AG04450 (cell line): ENCODE measurements at regions of chr2 and their contacts with region 1.

Region 1: DNA sequence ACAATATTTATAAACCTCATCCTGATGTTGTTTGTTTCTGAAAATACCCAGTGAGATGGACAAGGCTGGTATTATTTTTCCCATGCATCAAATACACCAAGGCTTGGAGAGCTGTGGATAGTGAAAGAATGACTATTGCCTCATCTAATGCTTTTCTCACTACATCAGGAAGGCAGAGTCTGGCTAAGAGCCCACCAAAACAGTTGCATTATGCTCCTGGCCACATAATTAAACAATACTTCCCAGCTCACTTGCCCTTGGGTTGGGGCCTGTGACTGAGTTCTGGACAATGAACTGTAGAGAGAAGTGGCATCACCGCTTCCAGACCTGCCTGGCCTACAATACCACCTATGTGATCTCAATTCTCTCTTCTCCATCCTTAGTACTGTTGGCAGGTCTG is 46.4 kb upstream of the REEP1 start:
- DNase-seq: peak; percentile 15
- H3K4me3 ChIP-seq: no peak overlapping the region
- H3K27ac ChIP-seq: no peak overlapping the region
- H3K27me3 ChIP-seq: no peaks in the 10 kb centered on the region
- CTCF ChIP-seq: no peak

Region 2: DNA sequence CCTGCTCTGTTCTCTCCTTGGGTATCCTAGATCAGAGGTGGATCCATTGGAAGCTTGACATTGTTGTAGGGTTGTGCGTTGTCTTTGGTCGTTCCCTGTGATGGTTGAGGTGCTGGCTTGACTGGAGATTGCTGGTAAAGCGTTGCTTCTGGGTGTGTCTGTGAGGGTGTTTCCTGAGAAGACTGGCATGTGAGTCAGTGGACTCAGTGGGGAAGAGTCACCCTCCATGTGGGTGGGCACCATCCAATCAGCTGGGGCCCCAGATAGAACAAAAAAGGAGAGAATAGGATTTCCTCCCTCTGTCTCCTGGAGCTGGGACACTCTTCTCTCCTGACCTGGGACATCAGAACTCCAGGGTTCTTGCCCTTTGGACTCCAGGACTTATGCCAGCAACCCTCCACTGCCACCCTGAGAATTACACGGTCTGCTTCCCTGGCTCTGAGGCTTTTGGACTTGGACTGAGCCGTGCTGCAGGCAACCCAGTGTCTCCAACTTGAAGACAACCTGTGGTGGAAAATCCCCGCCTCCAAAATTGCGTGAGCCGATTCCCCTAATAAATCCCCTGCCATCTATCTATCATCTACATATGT is 31.6 kb before region 1 on chr2:
- CTCF ChIA-PET with region 1: no interaction called
- POLR2A ChIA-PET with region 1: no interaction called
- DNase-seq: no peak
- H3K4me3 ChIP-seq: no peak overlapping the region
- H3K27ac ChIP-seq: no peak overlapping the region
- H3K27me3 ChIP-seq: peaks cover under 1% of the 10 kb centered on the region
- CTCF ChIP-seq: no peak

Region 3: DNA sequence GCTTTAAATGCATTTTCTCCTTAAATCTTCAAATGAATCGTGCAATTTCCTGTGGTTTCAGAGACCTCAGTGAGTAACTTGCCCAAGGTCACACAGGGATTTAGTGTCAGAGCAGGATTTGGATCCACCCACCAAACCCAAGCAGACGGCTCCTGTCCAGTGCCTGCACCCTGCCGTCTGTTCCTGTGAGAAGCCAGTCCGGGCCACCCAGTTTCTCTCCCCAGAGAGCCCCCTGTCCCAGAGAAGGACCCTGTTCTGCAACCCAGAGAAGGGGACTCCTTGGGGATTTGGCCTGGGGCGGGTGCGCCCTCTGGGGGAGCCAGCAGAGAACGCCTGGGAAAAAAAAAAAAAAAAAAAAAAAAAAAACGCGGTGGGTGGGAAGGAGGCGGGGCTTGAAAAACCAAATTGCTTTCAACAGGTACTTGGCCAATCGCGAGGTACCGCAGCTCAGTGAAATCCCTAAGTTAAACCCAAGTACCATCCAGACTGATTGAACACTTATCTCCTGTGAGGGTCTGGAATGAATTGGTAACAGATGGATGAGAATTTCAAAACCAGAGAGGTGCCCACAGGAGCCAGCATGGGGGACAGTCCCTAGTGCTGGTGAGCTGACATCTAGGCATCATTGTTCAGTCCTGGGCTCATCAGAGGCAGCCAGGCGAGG is 15.6 kb before region 1 on chr2:
- CTCF ChIA-PET with region 1: interaction called, 24 read pairs
- POLR2A ChIA-PET with region 1: no interaction called
- DNase-seq: no peak
- H3K4me3 ChIP-seq: no peak overlapping the region
- H3K27ac ChIP-seq: no peak overlapping the region
- H3K27me3 ChIP-seq: peaks cover 3% of the 10 kb centered on the region
- CTCF ChIP-seq: peak; percentile 68